Dorsolateral prefrontal cortex (tissue), 120 donors: ENCODE measurements at regions of chr18 and their contacts with region 1.

Region 1: GRCh38 chr18:9961041-9961440 is 47.2 kb downstream of the VAPA start:
- DNase-seq: no peak
- H3K4me3 ChIP-seq: no peak overlapping the region
- H3K27ac ChIP-seq: peak overlapping the region in 32 of 59 donors; percentile 1 to 70 (median 28)
- H3K27me3 ChIP-seq: no peaks in the 10 kb centered on the region
- CTCF ChIP-seq: peak in 1 of 56 donors; percentile 15

Region 2: DNA sequence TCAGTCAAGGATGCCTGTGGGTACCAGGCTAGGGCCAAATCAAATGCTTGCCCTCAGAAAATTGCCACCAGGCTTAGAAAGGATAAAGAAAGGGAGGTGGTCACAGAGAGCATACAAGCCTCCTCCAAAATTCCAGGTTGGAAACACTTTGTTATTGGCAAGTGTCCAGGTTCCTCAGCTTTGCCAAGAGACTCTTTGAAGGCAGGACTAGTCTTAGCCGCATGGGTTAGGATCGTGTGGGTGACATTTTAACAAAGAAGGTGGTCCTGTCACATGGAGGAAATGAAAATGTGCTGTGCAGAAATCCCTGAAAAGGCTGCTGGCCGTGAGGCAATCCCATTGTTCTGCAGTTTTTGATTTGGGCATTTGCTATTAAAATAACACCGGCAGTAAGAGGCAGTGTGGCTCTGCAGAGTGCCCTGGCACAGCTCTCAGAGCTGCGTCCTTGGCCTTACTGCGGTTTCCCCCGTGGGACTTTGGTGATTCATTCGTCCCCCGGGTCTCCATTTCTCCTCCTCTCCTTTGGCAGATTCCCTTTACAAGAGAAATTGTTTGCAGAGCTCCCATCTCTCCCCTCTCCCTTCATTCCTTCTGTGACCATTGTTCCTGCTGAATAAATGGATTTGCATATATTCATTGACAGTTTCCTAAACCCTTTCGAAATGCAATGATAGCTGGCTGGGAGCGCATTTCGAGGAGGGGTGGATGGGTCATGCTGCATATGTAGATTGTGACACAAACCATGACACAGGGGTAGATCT is 140.1 kb after region 1 on chr18:
- intact Hi-C with region 1: no loop called
- DNase-seq: no peak
- H3K4me3 ChIP-seq: peak overlapping the region in 7 of 59 donors; percentile 10 to 31 (median 20)
- H3K27ac ChIP-seq: no peak overlapping the region
- H3K27me3 ChIP-seq: no peaks in the 10 kb centered on the region
- CTCF ChIP-seq: no peak

Region 3: DNA sequence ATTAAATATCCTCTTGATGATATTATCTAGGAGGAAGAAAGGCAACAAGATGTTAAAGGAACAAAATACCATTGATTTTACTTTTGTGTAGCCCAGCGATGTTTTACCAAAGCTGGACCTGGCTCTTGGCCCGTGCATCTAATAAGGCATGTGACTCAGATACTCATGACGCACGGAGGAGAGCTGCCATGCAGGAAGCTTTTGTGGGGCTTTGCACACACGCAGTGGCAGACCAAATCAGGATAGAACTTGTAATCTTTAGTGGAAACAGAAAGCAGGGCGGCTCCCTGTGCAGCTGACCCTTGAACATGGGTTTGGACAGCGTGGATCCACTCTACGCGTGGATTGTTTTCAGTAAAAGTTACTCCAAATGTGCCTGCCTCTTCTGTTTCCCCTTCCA is 754.8 kb after region 1 on chr18:
- intact Hi-C with region 1: loop called in 1 of 2 experiments (anchors 10 kb)
- DNase-seq: no peak
- H3K4me3 ChIP-seq: no peak overlapping the region
- H3K27ac ChIP-seq: peak overlapping the region in 2 of 59 donors; percentile 3 to 26
- H3K27me3 ChIP-seq: no peaks in the 10 kb centered on the region
- CTCF ChIP-seq: no peak

Region 4: DNA sequence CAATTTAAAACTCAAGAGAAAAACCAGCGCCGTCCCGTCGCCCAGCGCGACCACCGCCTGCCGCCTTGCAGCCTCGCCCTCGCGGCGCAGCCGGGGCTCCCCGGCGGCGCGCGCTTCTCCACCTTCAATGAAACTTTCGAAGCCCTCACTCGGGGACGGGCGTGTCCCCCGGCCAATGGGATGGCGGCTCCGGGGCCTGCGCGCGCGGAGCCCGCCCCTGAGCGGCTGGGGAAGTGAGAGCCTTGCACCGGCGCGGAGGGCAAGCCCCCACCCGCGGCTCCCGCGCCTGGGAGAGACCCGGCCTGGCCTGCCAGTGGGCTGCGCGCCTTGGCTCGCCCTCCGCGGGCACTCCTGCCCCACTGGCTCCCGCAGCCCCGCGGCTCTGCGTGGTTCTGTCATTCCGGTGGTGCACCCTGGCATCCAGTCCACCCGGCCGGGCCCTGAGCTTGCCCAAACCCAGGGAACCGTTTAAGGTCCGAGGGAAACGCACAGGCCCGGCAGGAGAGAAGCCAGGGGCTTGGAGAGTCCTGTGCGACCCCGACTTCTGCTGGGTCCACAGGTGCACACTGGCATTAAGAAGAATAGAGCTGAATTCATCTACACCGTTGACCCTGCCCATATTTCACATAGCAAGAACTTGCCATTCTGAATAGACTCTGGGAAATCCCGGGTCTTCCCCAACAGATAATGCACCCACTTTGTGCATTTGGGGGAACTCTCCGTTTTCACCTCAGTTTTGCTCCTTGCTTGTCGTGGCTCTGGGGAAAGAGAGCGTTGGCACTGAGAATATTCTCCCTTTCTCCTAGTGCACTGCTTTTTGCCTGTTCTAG is 1188.6 kb after region 1 on chr18 and contains the start of gene PIEZO2:
- intact Hi-C with region 1: loop called in 1 of 2 experiments (anchors 10 kb)
- DNase-seq: peak in 9 of 10 donors; percentile 49 to 90 (median 76)
- H3K4me3 ChIP-seq: peak within 1 kb of the TSS; percentile 39 to 82 (median 64)
- H3K27ac ChIP-seq: peak within 1 kb of the TSS in 53 of 59 donors; percentile 31 to 94 (median 83)
- H3K27me3 ChIP-seq: peaks cover 0 to 79% (median 47%) of the 10 kb centered on the region in 45 donors
- CTCF ChIP-seq: peak in 26 of 56 donors; percentile 7 to 50 (median 25)
- total RNA-seq, gene PIEZO2: 3.3 to 115 (median 29.1) TPM